Right ventricle myocardium inferior (tissue), 1 donor: ENCODE measurements at regions of chr2 and their contacts with region 1.

Region 1: GRCh38 chr2:231104115-231104713 is 20.6 kb downstream of the HTR2B start:
- DNase-seq: no peak
- ATAC-seq: peak; percentile 57

Region 2: GRCh38 chr2:231191896-231192872 is 88.0 kb after region 1 on chr2:
- intact Hi-C with region 1: loop called (anchors 2 kb)
- DNase-seq: peak; percentile 84
- ATAC-seq: peak; percentile 68

Region 3: DNA sequence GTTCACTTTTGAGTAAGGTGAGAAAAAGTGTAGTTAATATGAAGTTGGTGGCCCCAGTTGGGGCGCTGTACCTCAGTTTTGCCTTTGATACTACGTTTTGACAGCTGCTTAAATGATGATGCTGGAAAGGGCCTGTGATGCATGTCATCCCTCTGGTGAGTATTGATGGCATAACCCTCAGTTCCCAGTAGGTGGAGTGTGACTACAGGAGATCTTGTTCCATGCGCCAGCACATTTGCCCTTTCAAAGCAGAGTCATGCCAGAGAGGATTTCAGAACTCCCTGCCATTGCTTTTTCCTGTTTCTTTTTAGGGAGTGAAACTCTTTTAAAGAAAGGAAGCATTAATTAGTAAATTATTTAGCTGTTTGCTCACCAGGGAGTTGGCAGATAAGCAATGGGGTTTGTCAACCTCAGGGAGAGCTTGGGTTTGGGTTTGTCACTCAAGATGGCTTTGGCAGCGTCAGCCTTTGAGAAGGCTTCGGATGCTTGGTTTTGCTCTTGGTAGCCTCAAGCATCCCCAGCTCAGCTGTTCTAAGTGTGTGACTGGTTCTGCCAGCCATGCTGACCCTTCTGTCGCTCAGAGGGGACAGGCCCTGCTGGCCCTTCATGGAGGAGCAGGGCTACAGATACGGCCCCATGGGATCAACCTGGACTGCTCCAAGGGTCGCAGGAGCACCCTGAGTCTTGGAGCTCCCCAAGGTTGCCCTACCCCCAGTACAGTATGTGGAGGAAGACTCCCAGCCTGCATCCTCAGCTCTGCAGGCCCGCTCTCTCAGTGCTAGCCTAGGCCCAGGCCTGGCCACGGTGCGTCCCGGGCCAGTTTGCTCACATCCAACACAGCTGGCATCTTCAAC is 123.3 kb after region 1 on chr2:
- intact Hi-C with region 1: loop called (anchors 10 kb)
- DNase-seq: no peak
- ATAC-seq: peak; percentile 93

Region 4: DNA sequence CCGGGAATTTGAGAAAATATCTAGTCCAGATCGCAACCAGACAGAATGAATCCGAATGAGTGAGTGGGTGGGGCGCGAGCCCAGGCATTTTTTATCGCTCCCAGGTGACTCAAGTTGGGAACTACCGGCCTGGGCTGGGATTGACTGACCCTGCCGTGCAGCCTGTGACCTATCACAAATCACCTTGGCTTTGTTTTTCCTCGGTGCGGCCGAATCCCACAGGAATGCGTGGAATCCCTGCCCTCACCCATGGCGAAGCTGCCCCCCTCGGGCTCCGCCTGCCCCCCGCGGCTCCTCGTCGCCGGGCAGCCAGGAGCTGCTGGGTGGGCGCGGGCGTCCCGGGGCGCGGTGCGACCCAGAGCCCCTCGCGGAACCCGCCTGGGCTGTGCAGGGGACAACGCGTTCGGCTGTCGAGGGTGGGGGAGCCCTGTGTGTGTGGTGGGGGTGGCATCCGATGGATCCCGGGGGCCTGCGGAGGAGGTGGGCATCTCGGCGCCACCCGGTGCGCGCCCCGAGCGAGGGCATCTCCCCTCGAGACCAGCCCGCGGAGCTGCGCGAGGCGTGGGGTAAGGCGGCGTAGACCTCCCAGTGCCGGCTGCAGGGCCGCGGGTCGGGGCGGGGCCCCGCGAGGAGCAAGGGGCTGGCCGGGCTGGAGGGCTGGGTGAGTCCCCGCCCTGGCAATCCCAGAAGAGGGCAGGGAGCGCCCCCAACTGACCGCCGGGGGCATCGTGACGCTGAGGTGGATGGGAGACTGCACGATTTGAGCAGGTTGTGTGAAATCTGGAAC is 307.8 kb after region 1 on chr2:
- intact Hi-C with region 1: loop called (anchors 10 kb)
- DNase-seq: peak; percentile 85
- ATAC-seq: peak; percentile 98

Region 5: DNA sequence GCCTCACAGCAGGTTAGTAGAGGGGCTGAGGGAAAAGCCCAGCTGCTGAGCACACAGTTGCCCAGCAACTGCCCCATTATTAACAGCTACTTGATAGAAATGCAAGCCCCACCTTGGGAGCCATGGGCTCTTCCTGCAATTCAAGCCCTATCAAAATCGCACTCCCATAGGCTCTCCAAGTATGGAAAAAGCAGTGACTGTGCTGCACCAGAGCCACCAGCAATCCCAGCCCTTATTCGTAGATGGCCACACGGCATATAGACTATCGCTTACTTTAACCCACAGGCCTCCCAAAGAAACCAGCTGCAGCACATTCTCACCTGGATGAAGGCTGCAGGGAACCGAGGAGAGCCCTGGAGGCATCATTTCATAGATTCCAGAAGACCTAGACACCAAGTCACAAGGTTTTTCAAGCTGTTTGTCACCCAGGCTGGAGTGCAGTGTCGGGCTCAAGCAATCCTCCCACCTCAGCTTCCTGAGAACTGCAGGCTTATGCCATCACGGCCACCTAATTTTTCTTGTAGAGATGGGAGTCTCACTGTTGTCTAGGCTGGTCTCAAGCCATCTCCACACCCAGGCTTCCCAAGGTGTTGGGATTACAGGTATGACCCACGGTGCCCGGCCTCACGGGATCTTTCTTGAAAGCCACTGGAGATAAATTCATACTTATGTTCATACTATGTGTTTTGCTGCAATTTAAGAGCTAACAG is 348.7 kb after region 1 on chr2:
- intact Hi-C with region 1: loop called (anchors 2 kb)
- DNase-seq: no peak
- ATAC-seq: no peak